ENCODE measurements at regions of chr4 and their contacts with region 1.

Region 1: DNA sequence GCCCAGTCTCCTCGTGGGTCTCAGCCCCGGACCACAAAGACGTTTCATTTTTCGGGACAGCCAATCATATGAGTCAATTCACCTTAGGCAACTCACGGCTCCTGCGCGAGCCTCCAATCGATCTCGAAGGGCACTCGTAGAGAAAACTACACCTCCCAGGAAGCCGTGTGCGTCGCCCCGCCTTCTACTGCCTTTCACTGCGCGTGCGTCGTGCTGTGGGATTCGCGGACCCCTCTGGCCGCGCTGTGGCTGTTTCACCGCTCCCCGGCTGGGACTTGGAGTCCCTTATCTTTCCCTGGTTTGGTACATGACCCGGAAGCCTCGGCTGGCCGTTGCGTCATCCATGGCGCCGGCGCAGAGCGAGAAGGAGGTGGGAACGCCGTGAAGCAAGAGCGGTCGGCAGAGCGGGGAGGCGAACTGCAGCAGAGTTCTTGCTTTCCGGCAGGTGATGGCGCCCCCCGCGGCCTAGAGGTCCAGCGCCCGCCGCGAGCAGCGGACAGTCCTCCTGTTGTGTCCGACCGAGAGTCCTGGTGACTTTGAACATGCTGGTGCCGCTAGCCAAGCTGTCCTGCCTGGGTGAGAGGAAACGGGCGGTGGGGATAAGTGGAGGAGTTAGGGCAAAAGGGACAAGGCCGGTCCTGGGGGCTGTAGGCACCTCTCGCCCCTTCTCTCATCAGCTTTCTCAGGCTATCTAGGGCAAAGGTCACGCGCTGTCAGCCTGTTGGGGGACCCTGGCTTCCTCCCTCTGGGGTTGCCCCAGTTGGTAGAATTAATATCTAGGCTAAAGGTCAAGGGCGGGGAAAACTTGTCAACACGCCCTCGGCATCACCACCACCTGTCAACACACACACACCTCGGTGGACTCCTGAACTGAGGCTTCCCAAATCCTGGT is at the start of gene ETFDH:
- DNase-seq: peak; percentile 99
- H3K4me3 Mint-ChIP-seq: peak within 1 kb of the TSS; percentile 99
- H3K27ac Mint-ChIP-seq: peak within 1 kb of the TSS; percentile 93
- H3K4me1 Mint-ChIP-seq: peaks cover 20% of the 10 kb centered on the region
- H3K27me3 Mint-ChIP-seq: no peaks in the 10 kb centered on the region
- total RNA-seq, gene ETFDH: 30.8 to 30.9 TPM

Region 2: DNA sequence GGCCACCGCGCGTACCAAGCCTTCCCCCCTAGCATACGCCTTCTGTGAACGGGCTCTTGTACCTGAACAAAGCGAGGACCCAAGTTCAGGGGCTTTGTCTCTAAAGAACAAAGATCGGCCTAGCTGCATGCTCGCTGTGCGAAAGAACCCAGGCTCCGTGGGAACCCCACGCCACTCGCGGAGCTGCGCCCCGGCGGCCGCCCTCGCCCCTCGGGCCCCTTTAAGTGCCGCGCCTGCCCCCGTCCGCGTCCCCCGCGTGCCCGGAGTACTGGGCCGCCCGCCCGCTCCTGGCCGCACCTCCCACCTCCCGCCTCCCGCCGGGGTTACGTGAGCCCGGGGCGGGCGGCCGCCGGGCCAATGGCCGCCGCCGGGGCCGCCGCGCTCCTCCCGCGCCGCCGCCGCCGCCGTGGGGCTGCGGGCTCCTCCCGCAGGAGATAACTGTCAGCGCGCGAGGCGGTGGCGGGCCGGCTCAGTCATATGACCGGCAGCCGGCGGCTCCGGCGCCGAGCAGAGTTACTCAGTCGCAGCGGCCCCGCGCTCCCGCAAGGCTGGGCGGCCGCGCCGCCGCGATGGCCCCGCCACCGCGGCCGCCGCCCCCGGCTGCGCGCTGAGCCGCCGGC is 96.5 kb after region 1 on chr4 and contains the start of gene FNIP2:
- CTCF ChIA-PET with region 1: no interaction called
- POLR2A ChIA-PET with region 1: interaction called, 8 read pairs
- intact Hi-C with region 1: loop called (anchors 1 kb)
- DNase-seq: peak; percentile 73
- H3K4me3 Mint-ChIP-seq: peak within 1 kb of the TSS; percentile 100
- H3K27ac Mint-ChIP-seq: peak within 1 kb of the TSS; percentile 91
- H3K4me1 Mint-ChIP-seq: peaks cover 43% of the 10 kb centered on the region
- H3K27me3 Mint-ChIP-seq: peaks cover 2% of the 10 kb centered on the region
- total RNA-seq, gene FNIP2: 17.7 to 19.4 TPM

Region 3: DNA sequence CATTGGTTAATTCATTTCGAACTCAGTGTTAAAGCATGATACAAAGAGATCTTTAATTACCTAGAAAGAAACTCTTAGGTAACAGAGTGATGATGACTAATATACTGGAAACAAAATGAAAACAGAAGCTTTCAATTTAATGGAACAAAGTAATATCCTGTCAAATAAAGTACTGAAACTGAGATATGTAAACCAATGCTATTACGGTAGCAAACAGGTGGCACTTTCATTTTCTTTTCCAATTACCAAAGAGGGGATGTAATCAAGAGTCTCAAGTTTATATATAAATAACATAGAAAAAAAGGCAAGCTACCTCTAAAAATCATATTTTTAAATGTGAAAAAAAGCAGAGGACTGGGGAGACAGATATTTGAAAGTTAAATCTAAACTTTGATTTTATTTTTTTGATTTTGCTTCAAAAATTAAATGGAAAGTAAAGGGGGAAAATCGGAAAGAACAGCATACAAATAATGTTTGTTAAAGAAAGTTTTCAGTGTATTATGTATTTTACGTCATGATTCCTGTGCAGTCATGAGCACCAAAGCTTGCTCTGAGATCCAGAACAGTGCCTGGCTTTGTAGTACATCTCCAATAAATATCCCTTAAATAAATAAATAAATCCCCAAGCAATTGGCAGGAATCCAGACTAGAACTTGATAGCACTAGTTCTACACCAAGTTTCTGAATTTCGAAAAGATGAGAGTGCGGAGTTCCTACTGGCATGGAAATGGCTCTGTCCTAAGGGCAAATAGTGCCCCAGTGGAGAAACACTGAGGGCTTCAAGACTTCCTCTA is 405.7 kb after region 1 on chr4:
- CTCF ChIA-PET with region 1: no interaction called
- POLR2A ChIA-PET with region 1: no interaction called
- intact Hi-C with region 1: loop called (anchors 1 kb)
- DNase-seq: no peak
- H3K4me3 Mint-ChIP-seq: no peak overlapping the region
- H3K27ac Mint-ChIP-seq: no peak overlapping the region
- H3K4me1 Mint-ChIP-seq: peaks cover 22% of the 10 kb centered on the region
- H3K27me3 Mint-ChIP-seq: no peaks in the 10 kb centered on the region

Region 4: GRCh38 chr4:159175085-159175988 is 503.2 kb after region 1 on chr4:
- CTCF ChIA-PET with region 1: no interaction called
- POLR2A ChIA-PET with region 1: no interaction called
- intact Hi-C with region 1: loop called (anchors 2 kb)
- DNase-seq: peak; percentile 69
- H3K4me3 Mint-ChIP-seq: no peak overlapping the region
- H3K27ac Mint-ChIP-seq: no peak overlapping the region
- H3K4me1 Mint-ChIP-seq: peaks cover 56% of the 10 kb centered on the region
- H3K27me3 Mint-ChIP-seq: no peaks in the 10 kb centered on the region